Esophagus muscularis mucosa (tissue), 4 donors: ENCODE measurements at regions of chr12 and their contacts with region 1.

Region 1: DNA sequence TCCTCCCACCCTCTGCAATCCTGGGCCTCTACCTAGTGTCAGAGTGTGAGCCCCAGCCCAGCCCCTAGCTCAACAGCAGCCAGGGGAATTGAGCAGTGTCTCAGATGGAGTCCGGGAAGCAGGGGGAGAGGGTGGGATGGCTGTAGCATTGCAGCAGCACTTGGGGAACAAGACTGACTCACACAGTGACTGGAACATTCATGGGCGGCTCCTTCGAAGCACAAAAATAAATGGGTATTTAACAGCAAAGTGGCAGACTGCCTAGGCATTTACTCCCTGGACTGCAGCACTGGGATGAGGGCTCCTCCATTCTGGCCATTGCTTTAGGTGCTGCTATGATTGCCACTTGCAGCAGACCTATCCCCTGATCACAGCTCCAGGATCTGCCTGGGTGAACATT is 46.0 kb upstream of the STK38L start:
- DNase-seq: peak; percentile 95
- H3K4me3 ChIP-seq: no peak overlapping the region
- H3K27ac ChIP-seq: peak overlapping the region; percentile 85 to 88 (median 86)
- H3K4me1 ChIP-seq: peaks cover 37 to 83% (median 72%) of the 10 kb centered on the region in 4 donors
- H3K27me3 ChIP-seq: no peaks in the 10 kb centered on the region
- CTCF ChIP-seq: no peak
- EP300 ChIP-seq: peak; percentile 52
- POLR2A ChIP-seq: no peak

Region 2: GRCh38 chr12:27243804-27244683 is 46.0 kb after region 1 on chr12 and contains the start of gene STK38L:
- intact Hi-C with region 1: loop called (anchors 5 kb)
- DNase-seq: peak; percentile 99
- H3K4me3 ChIP-seq: peak within 1 kb of the TSS; percentile 78 to 91 (median 80)
- H3K27ac ChIP-seq: peak within 1 kb of the TSS; percentile 88 to 94 (median 94)
- H3K4me1 ChIP-seq: peaks cover 14 to 43% (median 36%) of the 10 kb centered on the region in 4 donors
- H3K27me3 ChIP-seq: no peaks in the 10 kb centered on the region
- CTCF ChIP-seq: peak; percentile 36 to 42 (median 39)
- EP300 ChIP-seq: peak; percentile 22
- POLR2A ChIP-seq: peak; percentile 92
- total RNA-seq, gene STK38L: 64.6 to 102 (median 82.4) TPM